ENCODE measurements at regions of chr12 and their contacts with region 1.

Region 1: DNA sequence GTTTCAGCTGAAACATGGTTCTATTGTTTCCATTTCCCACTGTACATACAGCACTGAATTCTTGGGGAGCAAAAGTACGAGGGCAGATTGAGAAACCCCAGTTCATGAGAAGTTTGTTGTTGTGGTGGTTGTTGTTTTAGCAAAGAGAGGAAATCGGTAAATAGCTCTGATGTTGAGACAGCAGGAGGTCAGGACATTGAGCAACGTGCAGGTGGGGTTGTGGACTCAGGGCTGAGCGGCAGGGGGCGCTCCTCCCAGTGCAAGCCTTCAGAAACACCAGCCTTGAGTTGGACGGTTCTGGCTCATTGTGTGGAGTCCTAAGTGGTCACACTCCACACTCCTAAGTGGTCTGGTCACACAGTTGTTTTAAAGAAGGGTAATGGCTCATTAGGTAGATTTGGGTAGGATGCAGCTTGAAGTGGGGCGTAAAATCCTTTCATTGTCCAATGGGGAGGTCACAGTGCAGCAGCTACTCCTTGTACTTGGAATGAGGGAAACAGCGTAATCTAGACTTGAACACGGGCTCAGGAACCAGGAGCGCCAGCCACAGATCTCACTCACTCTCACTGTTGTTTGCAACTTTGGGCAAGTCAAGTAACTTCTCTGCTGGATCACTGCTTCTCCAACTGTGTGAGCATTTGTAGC is 14.5 kb upstream of the PWP1 start:
- DNase-seq: peak in 1 of 2 experiments; percentile 6
- H3K4me3 ChIP-seq: no peak overlapping the region
- H3K4me3 Mint-ChIP-seq: no peak overlapping the region
- H3K27ac Mint-ChIP-seq: no peak overlapping the region
- H3K4me1 ChIP-seq: no peaks in the 10 kb centered on the region
- H3K4me1 Mint-ChIP-seq: no peaks in the 10 kb centered on the region
- H3K27me3 ChIP-seq: no peaks in the 10 kb centered on the region
- H3K27me3 Mint-ChIP-seq: peaks cover 4% of the 10 kb centered on the region
- CTCF ChIP-seq: peak in 1 of 2 experiments; percentile 32

Region 2: DNA sequence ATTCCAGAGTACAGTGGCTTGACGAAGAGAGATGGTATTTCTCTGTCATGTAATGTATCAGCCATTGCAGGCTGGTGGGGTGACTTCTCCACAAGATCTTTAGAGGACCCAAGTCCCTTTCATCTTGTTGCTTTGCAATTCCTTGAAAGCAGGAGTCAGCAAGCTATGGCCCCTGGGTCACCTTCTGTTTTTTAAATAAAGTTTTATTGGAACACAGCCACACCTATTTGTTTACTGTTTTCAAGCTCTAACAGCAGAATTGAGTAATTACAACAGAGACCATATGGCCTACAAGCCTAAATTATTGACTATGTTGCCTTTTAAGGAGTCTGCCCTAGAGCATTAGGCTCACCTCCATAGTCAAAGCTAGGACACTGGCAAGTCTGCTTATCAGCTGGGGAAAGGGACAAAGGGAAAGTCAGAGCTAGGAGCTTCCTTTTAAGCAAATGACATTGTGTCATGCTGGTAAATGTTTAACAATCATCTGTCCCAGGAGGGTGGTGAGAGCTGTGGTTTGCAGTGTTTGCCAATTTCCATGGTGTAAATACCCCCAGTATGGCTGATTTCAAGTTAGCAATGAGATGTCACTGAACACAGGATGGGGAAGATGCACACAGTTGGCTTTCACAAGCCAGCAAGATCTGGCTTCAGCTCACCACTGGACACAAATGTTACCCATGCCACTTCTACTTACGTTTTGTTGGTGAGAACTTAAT is 73.3 kb before region 1 on chr12:
- CTCF ChIA-PET with region 1: interaction called, 14 read pairs
- POLR2A ChIA-PET with region 1: no interaction called
- intact Hi-C with region 1: no loop called
- DNase-seq: no peak
- H3K4me3 ChIP-seq: no peak overlapping the region
- H3K4me3 Mint-ChIP-seq: no peak overlapping the region
- H3K27ac Mint-ChIP-seq: no peak overlapping the region
- H3K4me1 ChIP-seq: no peaks in the 10 kb centered on the region
- H3K4me1 Mint-ChIP-seq: no peaks in the 10 kb centered on the region
- H3K27me3 ChIP-seq: no peaks in the 10 kb centered on the region
- H3K27me3 Mint-ChIP-seq: peaks cover 3% of the 10 kb centered on the region
- CTCF ChIP-seq: no peak

Measured in Caco-2 (cell line).